AG04450 (cell line): ENCODE measurements at regions of chr3 and their contacts with region 1.

Region 1: GRCh38 chr3:59424268-59425010 is 374.6 kb upstream of the CFAP20DC start:
- DNase-seq: peak; percentile 69
- H3K4me3 ChIP-seq: no peak overlapping the region
- H3K27ac ChIP-seq: no peak overlapping the region
- H3K27me3 ChIP-seq: no peaks in the 10 kb centered on the region
- CTCF ChIP-seq: no peak

Region 2: DNA sequence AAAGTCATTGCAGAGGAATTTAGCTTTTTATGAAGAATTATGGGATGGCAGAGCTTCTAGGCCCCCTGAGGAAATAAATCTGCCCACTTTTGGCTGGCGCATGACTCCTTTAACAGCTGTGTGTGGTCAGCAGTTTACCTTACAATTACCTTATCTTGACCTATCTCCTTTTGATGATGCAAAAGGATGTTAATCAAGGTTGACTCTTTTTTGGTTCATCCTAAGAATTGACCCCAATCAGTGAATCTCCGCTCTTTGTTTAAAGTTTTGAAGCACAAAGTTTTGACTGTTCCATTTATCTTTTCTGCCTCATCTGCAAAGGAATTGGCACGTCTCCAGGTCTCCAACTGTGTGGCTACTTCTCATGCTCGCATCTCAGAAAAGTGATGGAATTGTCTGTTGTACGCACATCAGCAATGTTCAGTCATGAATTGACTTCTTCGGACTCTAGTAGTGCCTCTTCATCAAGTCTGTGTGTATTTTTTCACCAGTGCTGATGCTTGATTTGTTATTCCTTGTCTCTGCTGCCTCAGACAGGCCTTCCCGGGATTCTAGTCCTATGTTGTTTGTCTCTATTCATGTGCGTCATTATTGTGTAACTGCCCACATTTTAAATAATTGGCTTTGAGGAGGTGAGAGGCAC is 178.5 kb before region 1 on chr3:
- CTCF ChIA-PET with region 1: no interaction called
- POLR2A ChIA-PET with region 1: interaction called, 24 read pairs
- DNase-seq: peak; percentile 90
- H3K4me3 ChIP-seq: no peak overlapping the region
- H3K27ac ChIP-seq: peak overlapping the region; percentile 57
- H3K27me3 ChIP-seq: no peaks in the 10 kb centered on the region
- CTCF ChIP-seq: no peak

Region 3: GRCh38 chr3:59313365-59313764 is 111.1 kb before region 1 on chr3:
- CTCF ChIA-PET with region 1: no interaction called
- POLR2A ChIA-PET with region 1: no interaction called
- DNase-seq: no peak
- H3K4me3 ChIP-seq: no peak overlapping the region
- H3K27ac ChIP-seq: no peak overlapping the region
- H3K27me3 ChIP-seq: no peaks in the 10 kb centered on the region
- CTCF ChIP-seq: peak; percentile 54

Region 4: GRCh38 chr3:59401924-59402323 is 22.5 kb before region 1 on chr3:
- CTCF ChIA-PET with region 1: no interaction called
- POLR2A ChIA-PET with region 1: no interaction called
- DNase-seq: no peak
- H3K4me3 ChIP-seq: no peak overlapping the region
- H3K27ac ChIP-seq: no peak overlapping the region
- H3K27me3 ChIP-seq: no peaks in the 10 kb centered on the region
- CTCF ChIP-seq: no peak